WTC11 (cell line): ENCODE measurements at regions of chr2 and their contacts with region 1.

Region 1: DNA sequence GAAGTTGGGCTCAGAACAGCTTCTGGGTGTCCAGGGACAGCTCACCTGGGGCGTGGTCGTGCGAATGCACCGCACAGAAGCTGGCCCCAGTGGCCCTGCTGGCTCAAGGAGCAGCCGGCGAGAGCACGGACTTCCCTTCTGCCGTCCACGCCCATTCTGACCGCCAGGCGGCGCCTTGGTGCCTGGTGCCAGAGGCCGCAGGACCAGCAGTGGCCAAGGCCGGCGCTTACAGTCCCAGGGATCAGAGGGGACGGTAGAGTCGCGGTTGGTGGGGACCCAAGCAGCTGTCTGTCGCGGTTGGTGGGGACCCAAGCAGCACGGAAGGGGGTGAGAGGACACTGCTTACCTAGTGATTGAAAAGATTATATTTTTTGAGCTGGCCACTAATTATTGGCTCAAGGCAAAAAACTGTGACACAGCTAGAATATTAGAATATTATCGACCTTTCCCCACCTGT is 25.7 kb downstream of the NPPC start:
- DNase-seq: peak; percentile 98
- ATAC-seq: peak; percentile 95
- H3K4me3 Mint-ChIP-seq: peak overlapping the region; percentile 34; the same call in 1 of the 2 replicates
- H3K27ac Mint-ChIP-seq: no peak overlapping the region
- H3K4me1 Mint-ChIP-seq: peaks cover 3% of the 10 kb centered on the region; the same call in 1 of the 2 replicates
- H3K27me3 Mint-ChIP-seq: no peaks in the 10 kb centered on the region
- CTCF ChIP-seq: peak; percentile 94

Region 2: GRCh38 chr2:231854671-231855070 is 45.8 kb before region 1 on chr2:
- CTCF ChIA-PET with region 1: interaction called, 11 read pairs
- POLR2A ChIA-PET with region 1: no interaction called
- DNase-seq: no peak
- ATAC-seq: no peak
- H3K4me3 Mint-ChIP-seq: no peak overlapping the region
- H3K27ac Mint-ChIP-seq: no peak overlapping the region; the same call in 1 of the 2 replicates
- H3K4me1 Mint-ChIP-seq: no peaks in the 10 kb centered on the region
- H3K27me3 Mint-ChIP-seq: peaks cover 14% of the 10 kb centered on the region
- CTCF ChIP-seq: no peak

Region 3: DNA sequence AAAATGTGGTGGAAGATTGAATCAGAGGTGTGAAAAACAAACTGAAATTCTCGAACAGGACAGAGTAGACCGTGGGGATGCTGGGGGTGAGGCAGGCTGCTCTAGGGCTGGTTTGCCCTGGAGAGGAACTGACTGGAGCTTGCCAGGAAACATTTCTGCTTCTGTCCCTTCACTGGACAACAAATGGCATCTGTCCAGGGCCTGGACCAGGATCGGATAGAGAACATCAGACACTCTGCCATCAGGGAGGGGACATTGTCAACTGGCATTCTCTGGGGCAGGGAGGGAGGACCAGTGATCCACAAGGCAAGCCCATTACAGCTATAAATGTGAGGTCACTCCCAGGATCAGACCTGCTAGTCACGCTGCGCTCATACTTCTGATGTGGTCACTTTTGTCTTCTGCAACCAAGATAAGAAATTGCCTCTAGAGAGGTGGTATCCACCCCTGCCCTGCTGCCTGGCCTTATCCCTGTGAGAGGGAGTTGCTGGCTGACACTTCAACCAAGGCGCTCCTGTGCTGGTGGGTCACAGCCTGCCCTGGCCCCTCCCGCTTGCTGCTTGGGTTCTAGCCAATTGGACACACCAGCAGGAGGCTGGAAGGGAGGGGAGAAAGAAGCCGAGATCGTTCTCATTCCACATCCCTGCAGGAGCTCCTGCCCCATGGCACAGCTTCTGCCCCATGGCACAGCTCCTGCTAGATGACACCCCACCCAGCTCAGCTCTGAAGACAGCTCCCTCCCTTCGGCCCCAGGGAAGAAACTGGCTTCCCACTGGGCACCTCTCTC is 17.0 kb after region 1 on chr2:
- CTCF ChIA-PET with region 1: interaction called, 24 read pairs
- POLR2A ChIA-PET with region 1: no interaction called
- DNase-seq: no peak
- ATAC-seq: peak; percentile 84
- H3K4me3 Mint-ChIP-seq: no peak overlapping the region
- H3K27ac Mint-ChIP-seq: no peak overlapping the region
- H3K4me1 Mint-ChIP-seq: peaks cover 3% of the 10 kb centered on the region; the same call in 1 of the 2 replicates
- H3K27me3 Mint-ChIP-seq: no peaks in the 10 kb centered on the region
- CTCF ChIP-seq: no peak

Region 4: DNA sequence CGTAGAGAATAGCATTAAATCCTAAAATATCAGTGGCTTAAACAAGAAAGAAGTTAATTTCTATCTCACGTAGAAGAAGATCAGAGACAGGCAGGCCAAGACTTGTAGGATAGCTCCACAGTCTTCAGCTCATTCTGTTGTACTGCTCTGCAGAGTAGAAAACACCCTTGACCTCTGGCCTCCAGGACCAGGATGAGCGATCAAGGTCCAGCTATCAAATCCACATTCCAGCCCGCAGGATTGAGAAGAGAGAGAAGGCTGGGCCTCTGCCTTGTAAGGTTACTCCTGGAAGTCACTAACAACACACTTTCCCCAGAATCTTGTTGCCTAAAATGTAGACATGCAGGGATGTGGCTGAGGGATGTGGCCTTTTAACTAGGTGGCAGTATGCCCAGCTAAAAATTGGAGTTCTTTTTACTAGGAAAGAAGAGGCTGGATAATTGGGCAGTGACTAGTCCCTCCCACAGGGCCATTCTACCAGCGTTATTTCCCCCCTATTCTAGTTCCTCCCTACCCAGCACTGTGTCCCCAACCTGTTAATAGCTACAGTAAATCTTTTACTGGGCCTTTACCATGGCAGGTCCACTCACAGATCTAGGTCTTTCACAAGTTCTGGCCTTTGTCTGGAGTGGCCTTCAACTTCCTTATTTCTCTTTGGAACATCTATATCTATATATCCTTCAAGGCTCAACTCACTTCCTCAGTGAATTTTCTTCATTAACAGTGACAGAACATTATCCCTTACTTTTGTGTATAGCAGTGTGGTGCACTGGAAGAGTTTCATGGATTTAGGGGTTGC is 226.0 kb after region 1 on chr2:
- CTCF ChIA-PET with region 1: interaction called, 11 read pairs
- POLR2A ChIA-PET with region 1: no interaction called
- DNase-seq: no peak
- ATAC-seq: no peak
- H3K4me3 Mint-ChIP-seq: no peak overlapping the region
- H3K27ac Mint-ChIP-seq: peak overlapping the region; percentile 85; the same call in 1 of the 2 replicates
- H3K4me1 Mint-ChIP-seq: peaks cover 5% of the 10 kb centered on the region
- H3K27me3 Mint-ChIP-seq: no peaks in the 10 kb centered on the region
- CTCF ChIP-seq: no peak

Region 5: GRCh38 chr2:232292395-232293154 is 392.1 kb after region 1 on chr2:
- CTCF ChIA-PET with region 1: interaction called, 18 read pairs
- POLR2A ChIA-PET with region 1: no interaction called
- DNase-seq: peak; percentile 88
- ATAC-seq: peak; percentile 91
- H3K4me3 Mint-ChIP-seq: no peak overlapping the region
- H3K27ac Mint-ChIP-seq: peak overlapping the region; percentile 78
- H3K4me1 Mint-ChIP-seq: peaks cover 11% of the 10 kb centered on the region
- H3K27me3 Mint-ChIP-seq: no peaks in the 10 kb centered on the region
- CTCF ChIP-seq: peak; percentile 81

Region 6: DNA sequence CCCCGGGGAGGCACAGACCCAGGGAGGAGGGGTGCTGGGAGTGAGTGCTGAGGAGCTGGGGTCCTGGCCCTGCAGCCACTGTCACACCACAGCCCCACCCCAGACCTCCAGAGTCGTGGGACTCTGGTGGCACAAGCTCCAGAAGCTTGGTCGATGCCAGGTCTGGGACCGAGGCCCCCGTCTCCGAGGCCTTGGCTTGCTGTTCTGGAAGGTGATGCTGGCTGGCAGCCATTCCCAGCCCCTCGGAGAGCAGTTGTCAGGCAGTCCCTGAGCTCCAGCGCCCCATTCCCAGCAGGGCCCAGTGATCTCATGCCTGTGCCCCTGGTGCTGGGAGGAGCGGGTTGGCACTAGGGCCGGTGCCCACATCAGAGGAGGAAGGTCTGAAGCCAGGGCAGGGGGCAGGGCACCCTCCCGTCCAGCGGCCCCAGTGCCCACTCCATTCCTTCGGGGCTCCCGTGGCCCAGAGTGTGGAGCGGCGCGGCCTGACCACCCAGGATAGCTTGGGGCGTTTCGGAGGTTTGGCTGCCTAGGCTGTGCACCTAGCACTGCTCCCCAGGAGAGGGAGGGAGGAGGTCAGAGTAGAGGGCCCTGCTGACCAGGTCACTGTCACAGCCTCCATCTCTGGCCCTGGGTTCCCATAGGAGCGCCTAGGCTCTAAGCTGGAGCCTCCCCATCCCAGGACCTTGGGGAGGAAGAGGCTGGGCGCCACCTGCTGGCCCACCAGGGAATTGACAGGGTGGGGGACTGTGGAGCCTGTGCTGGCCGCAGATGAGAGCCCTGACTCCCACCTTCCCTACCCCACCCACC is 538.6 kb after region 1 on chr2:
- CTCF ChIA-PET with region 1: interaction called, 15 read pairs
- POLR2A ChIA-PET with region 1: no interaction called
- DNase-seq: peak; percentile 80
- ATAC-seq: peak; percentile 71
- H3K4me3 Mint-ChIP-seq: no peak overlapping the region
- H3K27ac Mint-ChIP-seq: no peak overlapping the region
- H3K4me1 Mint-ChIP-seq: peaks cover 6% of the 10 kb centered on the region
- H3K27me3 Mint-ChIP-seq: peaks cover 3% of the 10 kb centered on the region; the same call in 1 of the 2 replicates
- CTCF ChIP-seq: peak; percentile 59; the same call in 1 of the 2 replicates